ENCODE measurements at regions of chr1 and their contacts with region 1.

Region 1: GRCh38 chr1:103106426-103107341 is 1.6 kb downstream of the COL11A1 start:
- DNase-seq: peak in 1 of 2 experiments; percentile 66
- H3K4me3 ChIP-seq: peak overlapping the region; percentile 61 to 98 (median 88)
- H3K27ac ChIP-seq: no peak overlapping the region
- H3K4me1 ChIP-seq: peaks cover 3 to 9% (median 7%) of the 10 kb centered on the region in 4 experiments
- H3K27me3 ChIP-seq: no peaks in the 10 kb centered on the region
- CTCF ChIP-seq: peak in 2 of 3 experiments; percentile 35 to 46; a peak in 2 of 4 replicates
- EP300 ChIP-seq: no peak
- POLR2A ChIP-seq: no peak
- RAD21 ChIP-seq: peak; percentile 46 to 58

Region 2: GRCh38 chr1:103089221-103089620 is 17.5 kb before region 1 on chr1:
- CTCF ChIA-PET with region 1: interaction called, 11 read pairs
- POLR2A ChIA-PET with region 1: interaction called, 4 read pairs
- DNase-seq: no peak
- H3K4me3 ChIP-seq: no peak overlapping the region
- H3K27ac ChIP-seq: no peak overlapping the region
- H3K4me1 ChIP-seq: no peaks in the 10 kb centered on the region
- H3K27me3 ChIP-seq: no peaks in the 10 kb centered on the region
- CTCF ChIP-seq: no peak
- EP300 ChIP-seq: no peak
- POLR2A ChIP-seq: no peak
- RAD21 ChIP-seq: no peak

Region 3: DNA sequence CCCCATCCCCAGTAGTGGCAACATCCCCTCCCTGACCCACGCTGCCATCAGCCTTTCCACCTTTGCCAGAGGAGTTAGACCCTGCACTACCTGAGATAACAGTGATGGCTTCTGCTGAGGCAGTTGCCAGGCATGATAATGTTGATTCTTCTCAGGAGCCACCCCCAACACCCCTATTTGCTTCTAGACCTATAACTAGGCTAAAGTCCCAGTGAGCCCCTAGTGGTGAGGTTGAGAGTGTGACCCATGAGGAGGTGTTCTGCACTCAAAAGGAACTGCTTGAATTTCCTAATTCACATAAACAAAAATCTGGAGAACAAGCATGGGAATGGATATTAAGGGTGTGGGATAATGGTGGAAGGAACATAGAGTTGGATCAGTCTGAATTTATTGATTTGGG is 161.2 kb after region 1 on chr1:
- CTCF ChIA-PET with region 1: interaction called, 11 read pairs
- POLR2A ChIA-PET with region 1: no interaction called
- DNase-seq: no peak
- H3K4me3 ChIP-seq: no peak overlapping the region
- H3K27ac ChIP-seq: no peak overlapping the region
- H3K4me1 ChIP-seq: peaks cover 0 to under 1% (median 0%) of the 10 kb centered on the region in 4 experiments; a peak in 1 of 7 replicates
- H3K27me3 ChIP-seq: no peaks in the 10 kb centered on the region
- CTCF ChIP-seq: peak in 2 of 3 experiments; percentile 35 to 64; a peak in 2 of 4 replicates
- EP300 ChIP-seq: no peak
- POLR2A ChIP-seq: no peak
- RAD21 ChIP-seq: peak; percentile 43 to 60

Region 4: GRCh38 chr1:103461161-103462105 is 354.7 kb after region 1 on chr1:
- CTCF ChIA-PET with region 1: interaction called, 12 read pairs
- POLR2A ChIA-PET with region 1: interaction called, 4 read pairs
- DNase-seq: no peak
- H3K4me3 ChIP-seq: no peak overlapping the region
- H3K27ac ChIP-seq: no peak overlapping the region
- H3K4me1 ChIP-seq: peaks cover 1 to 7% (median 4%) of the 10 kb centered on the region in 4 experiments; a peak in 5 of 7 replicates
- H3K27me3 ChIP-seq: no peaks in the 10 kb centered on the region
- CTCF ChIP-seq: peak in 2 of 3 experiments; percentile 14 to 36; a peak in 2 of 4 replicates
- EP300 ChIP-seq: no peak
- POLR2A ChIP-seq: no peak
- RAD21 ChIP-seq: peak in 1 of 2 experiments; percentile 68; a peak in 3 of 4 replicates